AG04449 (cell line): ENCODE measurements at regions of chr11 and their contacts with region 1.

Region 1: DNA sequence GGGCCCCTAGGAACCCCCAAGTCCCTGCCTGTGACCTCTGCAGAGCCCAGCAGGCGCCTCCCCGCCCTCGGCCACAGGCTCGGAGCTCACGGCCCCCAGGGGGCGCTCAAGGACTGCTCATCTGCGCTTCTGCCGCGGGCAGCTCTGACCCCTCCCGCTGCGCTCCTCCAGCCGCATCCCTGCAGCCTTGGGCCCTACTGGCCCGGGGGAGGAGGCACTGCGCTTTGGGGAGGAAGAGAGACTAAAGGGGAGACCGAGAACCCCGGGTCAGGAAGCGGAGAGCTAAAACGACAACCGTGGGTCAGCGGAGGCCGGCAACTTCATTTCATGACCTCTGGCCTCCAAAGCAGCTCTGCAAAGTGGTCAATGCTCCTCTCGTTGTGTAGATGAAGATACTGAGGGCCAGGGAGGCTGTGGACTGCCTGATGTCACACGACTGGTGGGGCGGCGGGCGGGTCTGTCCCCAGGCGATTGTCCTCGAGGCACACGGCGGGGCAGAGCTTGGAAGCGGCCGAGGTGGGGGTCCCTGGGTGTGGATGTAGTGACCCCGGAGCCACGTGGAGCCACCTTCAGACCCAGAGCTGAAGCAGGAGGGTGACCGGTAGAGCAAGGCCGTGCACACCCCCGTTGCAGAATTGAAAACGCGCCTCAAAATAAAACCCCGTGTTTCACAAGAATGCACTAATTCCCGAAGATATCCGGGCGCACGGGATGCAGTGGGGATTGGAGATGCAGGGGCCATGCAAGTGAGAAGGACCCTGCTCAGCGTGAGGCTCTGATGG is 2.7 kb upstream of the KRTAP5-6 start:
- DNase-seq: peak; percentile 3
- H3K4me3 ChIP-seq: no peak overlapping the region
- CTCF ChIP-seq: peak; percentile 97

Region 2: GRCh38 chr11:1486114-1486825 is 208.0 kb before region 1 on chr11 and contains the start of gene MOB2:
- CTCF ChIA-PET with region 1: no interaction called
- POLR2A ChIA-PET with region 1: no interaction called
- DNase-seq: no peak
- H3K4me3 ChIP-seq: no peak within 1 kb of the TSS
- CTCF ChIP-seq: no peak

Region 3: GRCh38 chr11:1682225-1682905 is 11.9 kb before region 1 on chr11:
- CTCF ChIA-PET with region 1: interaction called, 149 read pairs
- POLR2A ChIA-PET with region 1: no interaction called
- DNase-seq: no peak
- H3K4me3 ChIP-seq: no peak overlapping the region
- CTCF ChIP-seq: no peak

Region 4: DNA sequence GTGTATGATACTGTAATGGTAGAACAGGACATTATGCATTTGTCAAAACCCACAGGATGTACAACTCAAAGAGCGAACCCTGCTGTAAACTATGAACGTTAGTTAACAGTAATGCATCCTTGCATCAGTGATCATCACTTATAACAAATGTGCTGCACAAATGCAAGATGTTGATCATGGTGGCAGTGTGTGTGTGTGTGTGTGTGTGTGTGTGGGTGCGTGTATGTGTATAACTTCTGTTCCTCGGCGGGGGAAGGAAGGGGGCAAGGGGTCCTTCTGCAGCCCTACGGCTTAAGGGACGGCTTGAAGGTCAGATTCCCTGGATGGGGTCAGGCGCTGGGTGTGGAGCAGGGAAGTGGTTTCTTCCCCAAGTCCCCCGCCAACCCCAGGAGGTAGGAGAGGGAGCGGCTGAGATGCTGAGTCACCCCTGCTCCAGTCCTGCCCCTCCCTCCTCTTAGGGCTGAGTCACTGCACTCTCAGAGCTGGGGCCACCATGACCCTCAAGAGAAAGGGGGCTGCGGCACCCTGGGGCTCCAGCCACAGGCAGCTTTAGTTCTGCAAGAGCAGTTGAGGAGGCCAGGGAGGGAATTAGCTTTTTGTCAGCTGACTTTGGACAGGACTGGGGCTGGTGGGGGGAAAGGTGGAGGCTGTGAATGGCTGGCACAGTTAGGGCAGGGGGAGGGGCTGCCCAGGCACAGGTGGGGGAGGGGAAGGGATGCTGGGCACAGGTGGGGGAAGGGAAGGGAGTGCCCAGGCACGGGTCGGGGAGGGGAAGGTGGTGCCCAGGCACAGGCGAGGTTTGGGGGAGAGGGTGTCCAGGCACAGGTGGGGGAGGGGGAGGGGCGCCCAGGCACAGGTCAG is 78.2 kb after region 1 on chr11:
- CTCF ChIA-PET with region 1: interaction called, 15 read pairs
- POLR2A ChIA-PET with region 1: no interaction called
- DNase-seq: no peak
- H3K4me3 ChIP-seq: peak overlapping the region; percentile 29
- CTCF ChIP-seq: no peak

Region 5: GRCh38 chr11:1825039-1825740 is 130.9 kb after region 1 on chr11:
- CTCF ChIA-PET with region 1: interaction called, 671 read pairs
- POLR2A ChIA-PET with region 1: no interaction called
- DNase-seq: no peak
- H3K4me3 ChIP-seq: no peak overlapping the region
- CTCF ChIP-seq: peak; percentile 60

Region 6: GRCh38 chr11:1852877-1853276 is 158.6 kb after region 1 on chr11 and contains the start of gene LSP1:
- CTCF ChIA-PET with region 1: interaction called, 33 read pairs
- POLR2A ChIA-PET with region 1: no interaction called
- DNase-seq: no peak
- H3K4me3 ChIP-seq: no peak within 1 kb of the TSS
- CTCF ChIP-seq: no peak

Region 7: GRCh38 chr11:1896923-1897322 is 202.7 kb after region 1 on chr11:
- CTCF ChIA-PET with region 1: interaction called, 18 read pairs
- POLR2A ChIA-PET with region 1: no interaction called
- DNase-seq: no peak
- H3K4me3 ChIP-seq: no peak overlapping the region
- CTCF ChIP-seq: no peak

Region 8: DNA sequence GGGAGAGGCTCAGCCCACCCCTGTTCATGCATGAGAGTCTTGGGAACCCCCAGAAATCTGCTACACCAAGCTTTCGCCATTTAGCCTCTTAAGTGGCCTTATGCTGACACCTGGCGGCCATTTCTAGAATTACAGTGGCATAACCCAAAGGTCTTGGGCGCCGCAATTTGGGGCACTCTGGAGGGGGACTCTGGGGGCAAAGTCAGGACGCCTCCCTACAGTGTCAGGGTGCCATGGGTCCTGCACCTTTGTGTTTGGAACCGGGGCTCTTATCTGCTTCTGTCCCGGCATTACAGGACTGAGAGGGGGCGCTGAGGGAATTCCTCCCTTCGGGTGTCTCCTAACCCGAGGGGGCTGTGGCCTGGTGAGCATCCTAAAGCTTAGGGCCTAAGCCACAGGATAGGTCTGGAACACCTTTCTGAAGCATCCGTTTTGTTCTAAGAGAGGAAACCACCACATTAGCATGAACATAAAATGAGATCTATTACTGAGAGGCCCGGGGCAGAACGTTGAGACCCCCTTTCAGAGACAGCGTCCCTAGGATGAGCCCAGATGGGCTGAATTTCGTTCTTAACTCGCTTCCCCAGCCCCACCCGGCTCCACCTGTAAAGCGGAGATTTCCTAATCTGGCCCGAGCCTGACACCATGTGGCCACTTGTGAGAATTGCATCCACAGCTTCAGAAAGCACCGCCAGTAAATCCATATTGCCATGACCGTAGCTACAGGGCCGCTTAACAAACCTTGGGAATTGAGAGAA is 457.4 kb after region 1 on chr11:
- CTCF ChIA-PET with region 1: interaction called, 154 read pairs
- POLR2A ChIA-PET with region 1: no interaction called
- DNase-seq: no peak
- H3K4me3 ChIP-seq: no peak overlapping the region
- CTCF ChIP-seq: peak; percentile 80